ENCODE measurements at regions of chr1 and their contacts with region 1.

Region 1: GRCh38 chr1:181189691-181190363 is 101.3 kb downstream of the IER5 start:
- DNase-seq: peak; percentile 90
- H3K4me3 ChIP-seq: peak overlapping the region in 2 of 8 donors; percentile 25 to 50
- H3K27ac ChIP-seq: no peak overlapping the region
- H3K4me1 ChIP-seq: peaks cover 0 to 13% (median 9%) of the 10 kb centered on the region in 6 donors
- H3K27me3 ChIP-seq: peaks cover 0 to 42% (median 8%) of the 10 kb centered on the region in 7 donors
- CTCF ChIP-seq: peak; percentile 67 to 98 (median 89)
- POLR2A ChIP-seq: no peak

Region 2: GRCh38 chr1:181424786-181425403 is 235.1 kb after region 1 on chr1:
- intact Hi-C with region 1: loop called (anchors 5 kb)
- DNase-seq: no peak
- H3K4me3 ChIP-seq: no peak overlapping the region
- H3K27ac ChIP-seq: no peak overlapping the region
- H3K4me1 ChIP-seq: peaks cover 0 to 8% (median 1%) of the 10 kb centered on the region in 6 donors
- H3K27me3 ChIP-seq: peaks cover 0 to 44% (median 7%) of the 10 kb centered on the region in 7 donors
- CTCF ChIP-seq: peak; percentile 82 to 96 (median 92)
- POLR2A ChIP-seq: no peak

Measured in spleen (tissue), 13 donors.